Activated CD4-positive, alpha-beta T cell treated with anti-CD3 and anti-CD28 coated beads, Interleukin-2, amount 10 ng/mL, durations not matched to agents 24 days and 14 days (primary cell): ENCODE measurements at regions of chr19 and their contacts with region 1.

Region 1: DNA sequence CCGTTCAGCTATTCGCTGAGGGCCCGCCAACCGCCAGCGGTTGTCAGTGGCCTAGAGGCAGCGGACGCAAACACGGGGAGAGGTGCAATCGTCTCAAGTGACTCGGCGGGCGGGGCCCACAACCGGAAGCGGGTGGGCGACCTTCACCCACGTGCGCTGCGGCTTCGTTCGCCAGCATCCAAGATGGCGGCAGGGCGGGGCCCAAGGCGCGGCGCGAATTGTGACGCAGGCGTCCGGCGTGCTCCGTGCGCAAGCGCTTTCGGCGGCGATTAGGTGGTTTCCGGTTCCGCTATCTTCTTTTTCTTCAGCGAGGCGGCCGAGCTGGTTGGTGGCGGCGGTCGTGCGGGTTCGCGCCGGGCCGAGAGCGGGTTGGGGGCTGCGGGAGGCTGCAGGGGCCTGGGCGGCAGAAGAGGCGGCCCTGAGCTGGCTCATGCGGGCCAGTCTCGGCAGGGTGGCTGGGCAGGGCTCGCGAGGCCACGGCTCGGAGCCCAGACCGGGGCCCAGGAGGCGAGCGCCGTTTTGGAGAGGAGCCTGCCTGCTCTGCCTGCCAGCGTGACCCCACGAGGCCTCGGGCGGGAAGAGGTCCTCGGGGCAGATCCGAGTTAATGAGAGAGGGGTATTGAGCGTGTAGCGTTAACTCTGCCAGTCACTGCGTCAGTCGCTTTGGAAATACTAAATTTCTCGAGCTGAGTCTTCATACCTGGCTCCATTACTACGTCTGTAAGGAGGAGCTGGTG is at the start of gene UBA52:
- DNase-seq: peak; percentile 100
- H3K4me3 Mint-ChIP-seq: peak within 1 kb of the TSS; percentile 99
- H3K27ac Mint-ChIP-seq: peak within 1 kb of the TSS; percentile 95
- H3K4me1 Mint-ChIP-seq: peaks cover 24% of the 10 kb centered on the region
- H3K27me3 Mint-ChIP-seq: no peaks in the 10 kb centered on the region
- total RNA-seq, gene UBA52: 1,581 and 1,604 TPM in 2 replicates

Region 2: DNA sequence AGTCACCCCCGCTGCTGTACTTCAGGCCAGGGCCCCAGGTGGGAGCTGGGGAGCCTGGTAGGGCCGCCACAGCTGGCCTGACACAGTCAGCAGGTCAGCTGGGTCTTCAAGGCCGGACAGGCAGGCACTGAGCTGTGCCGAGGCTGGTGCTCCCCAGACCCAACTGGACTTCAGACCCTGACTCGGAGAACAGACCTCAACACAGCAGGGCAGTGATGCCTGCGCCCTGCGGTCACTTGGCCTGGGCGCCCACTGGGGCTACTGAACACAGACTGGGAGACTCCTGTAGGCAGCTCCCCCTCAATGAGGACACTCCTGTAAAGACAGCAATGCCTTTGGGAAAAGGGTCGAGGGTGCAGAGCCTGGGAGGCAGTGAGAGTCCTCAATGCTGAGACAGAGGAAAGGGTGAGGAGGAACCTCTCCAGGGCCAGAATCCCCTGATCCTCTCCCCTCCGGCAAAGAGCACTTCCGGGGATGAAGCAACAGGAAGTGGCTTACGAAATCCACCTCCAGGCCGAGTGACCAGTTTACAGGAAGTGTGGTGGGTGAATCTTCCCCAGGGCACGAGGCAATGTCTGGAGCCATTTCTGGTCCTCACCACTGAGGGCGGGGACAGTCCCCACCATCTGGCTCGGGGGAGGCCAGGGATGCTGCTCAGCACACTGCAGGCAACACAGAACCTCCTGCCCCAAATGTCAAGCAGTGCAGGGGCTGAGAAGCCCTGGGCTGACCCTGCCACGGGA is 93.0 kb before region 1 on chr19:
- intact Hi-C with region 1: loop called (anchors 5 kb)
- DNase-seq: peak; percentile 84
- H3K4me3 Mint-ChIP-seq: peak overlapping the region; percentile 82
- H3K27ac Mint-ChIP-seq: peak overlapping the region; percentile 96
- H3K4me1 Mint-ChIP-seq: peaks cover 61% of the 10 kb centered on the region
- H3K27me3 Mint-ChIP-seq: no peaks in the 10 kb centered on the region

Region 3: GRCh38 chr19:18557474-18558201 is 14.1 kb before region 1 on chr19 and contains the start of gene KXD1:
- intact Hi-C with region 1: loop called (anchors 1 kb)
- DNase-seq: peak; percentile 99
- H3K4me3 Mint-ChIP-seq: peak within 1 kb of the TSS; percentile 97
- H3K27ac Mint-ChIP-seq: peak within 1 kb of the TSS; percentile 93
- H3K4me1 Mint-ChIP-seq: peaks cover 18% of the 10 kb centered on the region
- H3K27me3 Mint-ChIP-seq: no peaks in the 10 kb centered on the region
- total RNA-seq, gene KXD1: 124 and 134 TPM in 2 replicates